SK-N-SH (cell line): ENCODE measurements at regions of chr18 and their contacts with region 1.

Region 1: DNA sequence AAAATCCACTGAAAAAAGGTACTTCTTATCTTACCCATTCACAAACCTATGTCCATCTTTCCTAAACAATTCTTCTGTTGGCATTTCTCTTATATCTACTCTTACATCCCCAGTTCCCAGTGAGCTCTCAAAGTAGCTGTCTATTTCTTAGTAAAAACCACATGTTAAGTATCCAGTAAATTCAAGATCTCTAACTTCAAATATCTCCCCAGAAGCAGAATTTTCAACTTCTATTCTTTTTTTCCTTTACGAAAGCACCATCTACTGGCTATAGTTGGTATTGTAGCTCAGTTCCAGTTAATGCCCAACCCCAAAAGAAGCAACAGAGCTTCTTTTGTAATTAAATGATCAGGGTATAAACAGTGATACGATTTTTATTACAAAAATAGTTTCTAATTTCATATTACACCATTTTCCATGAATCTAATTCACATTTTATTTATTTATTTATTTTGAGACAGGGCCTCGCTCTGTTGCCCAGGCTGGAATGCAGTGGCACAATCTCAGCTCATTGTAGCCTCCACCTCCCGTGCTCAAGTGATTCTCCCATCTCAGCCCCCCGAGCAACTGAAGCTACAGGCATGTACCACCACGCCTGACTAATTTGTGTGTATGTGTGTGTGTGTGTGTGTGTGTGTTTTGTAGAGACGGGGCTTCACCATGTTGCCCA is 28.5 kb downstream of the HRH4 start:
- DNase-seq: peak; percentile 53
- H3K4me3 ChIP-seq: no peak overlapping the region; a peak in 1 of 4 replicates
- H3K27ac ChIP-seq: no peak overlapping the region
- H3K4me1 ChIP-seq: peaks cover 0 to 10% of the 10 kb centered on the region in 2 experiments; a peak in 1 of 4 replicates
- H3K27me3 ChIP-seq: no peaks in the 10 kb centered on the region
- CTCF ChIP-seq: peak; percentile 82
- EP300 ChIP-seq: no peak
- RAD21 ChIP-seq: peak; percentile 73

Region 2: GRCh38 chr18:24346254-24346653 is 142.7 kb before region 1 on chr18:
- CTCF ChIA-PET with region 1: interaction called, 10 read pairs
- POLR2A ChIA-PET with region 1: no interaction called
- DNase-seq: no peak
- H3K4me3 ChIP-seq: no peak overlapping the region
- H3K27ac ChIP-seq: no peak overlapping the region
- H3K4me1 ChIP-seq: no peaks in the 10 kb centered on the region
- H3K27me3 ChIP-seq: no peaks in the 10 kb centered on the region
- CTCF ChIP-seq: no peak
- EP300 ChIP-seq: no peak
- RAD21 ChIP-seq: no peak

Region 3: DNA sequence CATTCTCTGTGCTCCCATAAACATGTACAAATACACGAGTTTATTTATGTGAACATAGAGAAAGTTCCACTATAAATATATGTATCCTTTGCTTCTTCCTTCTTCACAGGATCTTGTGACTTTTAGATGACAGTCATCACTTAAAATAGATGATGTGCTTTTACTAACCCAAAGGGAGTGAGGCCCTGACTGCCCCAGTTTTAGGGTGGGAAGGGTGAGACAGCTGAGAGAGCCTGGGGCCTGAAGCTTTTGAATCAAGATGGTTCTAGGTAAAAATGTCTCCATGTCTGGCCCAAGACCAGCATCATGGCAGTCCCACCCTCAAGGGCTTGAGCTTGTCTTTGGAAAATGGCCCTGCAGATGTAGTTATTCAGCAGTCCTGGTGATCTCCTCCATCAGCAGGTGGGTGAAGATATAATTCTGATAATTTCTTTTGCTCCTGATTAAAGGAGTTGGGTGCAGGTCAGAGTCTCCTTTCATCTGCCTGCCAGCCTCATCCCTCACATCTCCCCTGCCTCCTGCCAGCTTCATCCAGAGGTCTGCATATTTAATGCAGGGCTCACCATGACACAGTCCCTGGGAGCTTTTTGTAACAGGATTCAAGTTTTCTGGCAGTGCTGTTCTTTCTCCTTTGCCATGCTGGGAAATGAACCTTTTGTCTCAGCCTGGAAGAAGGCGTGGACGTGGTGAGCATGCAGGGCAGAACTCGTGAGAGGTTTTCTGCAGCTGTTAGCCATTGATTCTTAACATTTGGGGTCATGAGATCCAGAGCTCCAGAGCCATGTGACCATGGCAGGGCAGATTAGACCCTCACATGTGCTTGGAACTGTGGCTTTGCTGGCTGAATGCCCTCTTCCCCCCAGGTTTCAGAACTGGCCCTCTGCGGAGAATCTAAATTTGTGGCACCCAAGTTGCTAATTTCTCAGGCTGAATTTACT is 25.9 kb before region 1 on chr18:
- CTCF ChIA-PET with region 1: interaction called, 10 read pairs
- POLR2A ChIA-PET with region 1: no interaction called
- DNase-seq: no peak
- H3K4me3 ChIP-seq: no peak overlapping the region
- H3K27ac ChIP-seq: no peak overlapping the region
- H3K4me1 ChIP-seq: no peaks in the 10 kb centered on the region; a peak in 1 of 4 replicates
- H3K27me3 ChIP-seq: no peaks in the 10 kb centered on the region
- CTCF ChIP-seq: no peak
- EP300 ChIP-seq: no peak
- RAD21 ChIP-seq: no peak

Region 4: DNA sequence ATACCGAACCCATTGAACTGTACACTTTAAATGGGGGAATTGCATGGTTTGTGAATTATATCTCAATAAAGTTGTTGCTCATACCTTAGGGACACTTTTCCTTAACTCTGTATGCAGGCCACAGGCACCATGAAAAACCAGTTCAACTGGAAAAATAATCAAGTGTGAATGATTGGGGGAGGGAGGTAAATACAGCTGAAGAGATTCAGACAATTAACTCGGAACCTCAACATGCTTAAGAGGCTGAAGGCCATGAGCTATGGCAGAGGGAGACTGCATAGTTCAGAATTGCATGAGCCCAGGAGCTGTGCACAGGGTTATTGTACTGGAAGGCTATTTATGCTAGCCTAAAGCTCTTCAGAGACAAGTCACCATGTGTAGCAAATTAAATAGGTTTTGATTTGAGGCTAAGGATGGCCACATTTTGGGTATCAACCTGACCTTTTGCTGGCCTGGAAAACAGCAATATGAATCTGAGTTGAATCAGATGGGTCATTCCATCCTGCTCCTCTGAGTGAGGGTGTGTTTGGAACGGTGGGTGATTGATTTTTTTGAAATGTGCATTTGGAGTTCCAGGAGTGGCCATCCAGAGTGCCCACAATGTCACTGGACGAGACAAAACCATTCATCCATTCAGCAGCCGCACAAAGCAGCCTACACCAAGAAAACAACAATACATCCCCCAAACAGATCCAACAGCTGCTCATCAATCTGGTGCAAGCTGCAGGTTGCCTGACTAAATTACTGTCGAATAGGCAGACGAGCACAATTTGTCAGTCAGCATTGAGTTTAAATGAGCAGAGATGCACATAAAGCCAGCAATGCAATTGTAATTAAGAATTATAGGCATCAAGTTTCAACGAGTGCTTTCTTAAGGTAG is 13.9 kb after region 1 on chr18:
- CTCF ChIA-PET with region 1: interaction called, 41 read pairs
- POLR2A ChIA-PET with region 1: no interaction called
- DNase-seq: no peak
- H3K4me3 ChIP-seq: no peak overlapping the region
- H3K27ac ChIP-seq: no peak overlapping the region
- H3K4me1 ChIP-seq: no peaks in the 10 kb centered on the region
- H3K27me3 ChIP-seq: no peaks in the 10 kb centered on the region; the same call in 1 of the 2 replicates
- CTCF ChIP-seq: no peak
- EP300 ChIP-seq: no peak
- RAD21 ChIP-seq: no peak

Region 5: GRCh38 chr18:24543805-24544498 is 55.0 kb after region 1 on chr18:
- CTCF ChIA-PET with region 1: interaction called, 60 read pairs
- POLR2A ChIA-PET with region 1: no interaction called
- DNase-seq: peak; percentile 39
- H3K4me3 ChIP-seq: no peak overlapping the region; a peak in 1 of 4 replicates
- H3K27ac ChIP-seq: no peak overlapping the region
- H3K4me1 ChIP-seq: peaks cover 0 to 5% of the 10 kb centered on the region in 2 experiments; a peak in 2 of 4 replicates
- H3K27me3 ChIP-seq: no peaks in the 10 kb centered on the region; the same call in 1 of the 2 replicates
- CTCF ChIP-seq: peak; percentile 52
- EP300 ChIP-seq: no peak
- RAD21 ChIP-seq: peak; percentile 82

Region 6: DNA sequence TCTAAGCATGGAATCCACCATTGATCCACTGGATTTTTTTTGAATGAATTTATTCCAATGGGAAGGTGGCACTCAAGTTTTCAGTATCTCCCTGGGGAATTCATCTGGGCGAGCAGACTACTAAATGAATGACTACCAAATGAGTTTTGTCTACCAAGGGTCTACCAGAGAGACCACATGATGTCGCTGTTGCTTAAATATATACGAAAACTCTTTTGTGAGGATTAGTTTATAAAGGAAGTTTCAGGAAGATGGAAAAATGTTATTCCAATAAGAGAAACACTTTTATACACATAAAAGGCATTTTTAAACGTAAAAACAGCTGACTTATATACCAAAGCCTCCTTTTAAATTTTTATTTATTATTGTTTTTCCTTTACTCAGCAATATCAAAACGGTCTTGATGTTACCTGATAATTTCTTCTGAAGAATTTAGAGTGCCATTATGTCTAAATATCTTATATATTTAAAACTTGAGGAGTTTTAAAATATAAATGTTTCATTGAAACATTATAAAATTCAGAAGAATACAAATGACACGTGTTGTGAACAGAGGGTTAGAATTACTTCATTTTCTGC is 111.2 kb after region 1 on chr18:
- CTCF ChIA-PET with region 1: interaction called, 20 read pairs
- POLR2A ChIA-PET with region 1: no interaction called
- DNase-seq: peak; percentile 56
- H3K4me3 ChIP-seq: no peak overlapping the region
- H3K27ac ChIP-seq: no peak overlapping the region
- H3K4me1 ChIP-seq: no peaks in the 10 kb centered on the region
- H3K27me3 ChIP-seq: no peaks in the 10 kb centered on the region
- CTCF ChIP-seq: peak; percentile 75
- EP300 ChIP-seq: no peak
- RAD21 ChIP-seq: peak; percentile 84

Region 7: GRCh38 chr18:24734058-24734457 is 245.1 kb after region 1 on chr18:
- CTCF ChIA-PET with region 1: interaction called, 55 read pairs
- POLR2A ChIA-PET with region 1: no interaction called
- DNase-seq: peak; percentile 28
- H3K4me3 ChIP-seq: no peak overlapping the region
- H3K27ac ChIP-seq: no peak overlapping the region
- H3K4me1 ChIP-seq: no peaks in the 10 kb centered on the region
- H3K27me3 ChIP-seq: peaks cover 3% of the 10 kb centered on the region; the same call in 1 of the 2 replicates
- CTCF ChIP-seq: no peak
- EP300 ChIP-seq: no peak
- RAD21 ChIP-seq: peak; percentile 60